ENCODE measurements at regions of chr17 and their contacts with region 1.

Region 1: GRCh38 chr17:8248751-8249607 is at the start of gene PFAS:
- H3K4me3 Mint-ChIP-seq: peak within 1 kb of the TSS; percentile 90
- H3K27ac Mint-ChIP-seq: peak within 1 kb of the TSS; percentile 99
- H3K4me1 Mint-ChIP-seq: peaks cover 33% of the 10 kb centered on the region
- H3K27me3 Mint-ChIP-seq: no peaks in the 10 kb centered on the region

Region 2: DNA sequence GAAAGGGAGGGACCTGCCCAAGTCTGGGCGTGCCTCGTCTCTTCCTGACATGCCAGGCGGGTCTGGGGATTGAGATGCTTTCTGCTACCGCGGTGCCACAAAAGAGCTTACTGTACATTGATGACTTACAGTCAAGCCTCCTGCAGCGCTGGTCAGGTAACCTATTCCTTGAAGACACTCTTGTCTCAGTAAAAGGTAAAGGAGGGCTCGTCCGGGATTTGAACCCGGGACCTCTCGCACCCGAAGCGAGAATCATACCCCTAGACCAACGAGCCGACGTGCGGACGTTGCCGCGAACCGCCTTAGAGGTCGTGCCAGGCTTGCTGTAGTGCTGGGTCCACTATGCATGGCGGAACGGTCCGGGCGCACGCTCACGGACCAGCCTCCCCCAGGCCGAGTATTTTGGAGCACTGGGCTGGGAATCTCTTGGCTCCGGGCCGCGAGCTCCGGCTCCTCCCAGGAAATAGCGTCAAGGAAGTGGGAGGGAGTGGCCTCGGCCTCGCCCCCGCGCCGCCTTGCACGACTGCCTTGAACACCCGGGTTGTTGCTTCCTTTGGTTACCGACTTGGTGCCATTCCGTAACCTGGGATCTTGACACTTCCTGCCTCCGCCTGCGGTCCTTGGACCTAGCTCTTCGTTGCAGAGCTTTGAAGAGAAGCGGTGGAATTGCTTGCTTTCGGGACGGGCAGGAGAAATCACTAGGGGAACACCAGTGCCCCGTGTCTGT is 26.2 kb before region 1 on chr17:
- intact Hi-C with region 1: loop called (anchors 1 kb)
- H3K4me3 Mint-ChIP-seq: peak overlapping the region; percentile 89
- H3K27ac Mint-ChIP-seq: peak overlapping the region; percentile 99
- H3K4me1 Mint-ChIP-seq: peaks cover 63% of the 10 kb centered on the region
- H3K27me3 Mint-ChIP-seq: no peaks in the 10 kb centered on the region

Region 3: GRCh38 chr17:8288336-8289102 is 39.5 kb after region 1 on chr17 and contains the start of gene RANGRF:
- intact Hi-C with region 1: loop called (anchors 2 kb)
- H3K4me3 Mint-ChIP-seq: peak within 1 kb of the TSS; percentile 92
- H3K27ac Mint-ChIP-seq: peak within 1 kb of the TSS; percentile 95
- H3K4me1 Mint-ChIP-seq: peaks cover 70% of the 10 kb centered on the region
- H3K27me3 Mint-ChIP-seq: no peaks in the 10 kb centered on the region

Region 4: DNA sequence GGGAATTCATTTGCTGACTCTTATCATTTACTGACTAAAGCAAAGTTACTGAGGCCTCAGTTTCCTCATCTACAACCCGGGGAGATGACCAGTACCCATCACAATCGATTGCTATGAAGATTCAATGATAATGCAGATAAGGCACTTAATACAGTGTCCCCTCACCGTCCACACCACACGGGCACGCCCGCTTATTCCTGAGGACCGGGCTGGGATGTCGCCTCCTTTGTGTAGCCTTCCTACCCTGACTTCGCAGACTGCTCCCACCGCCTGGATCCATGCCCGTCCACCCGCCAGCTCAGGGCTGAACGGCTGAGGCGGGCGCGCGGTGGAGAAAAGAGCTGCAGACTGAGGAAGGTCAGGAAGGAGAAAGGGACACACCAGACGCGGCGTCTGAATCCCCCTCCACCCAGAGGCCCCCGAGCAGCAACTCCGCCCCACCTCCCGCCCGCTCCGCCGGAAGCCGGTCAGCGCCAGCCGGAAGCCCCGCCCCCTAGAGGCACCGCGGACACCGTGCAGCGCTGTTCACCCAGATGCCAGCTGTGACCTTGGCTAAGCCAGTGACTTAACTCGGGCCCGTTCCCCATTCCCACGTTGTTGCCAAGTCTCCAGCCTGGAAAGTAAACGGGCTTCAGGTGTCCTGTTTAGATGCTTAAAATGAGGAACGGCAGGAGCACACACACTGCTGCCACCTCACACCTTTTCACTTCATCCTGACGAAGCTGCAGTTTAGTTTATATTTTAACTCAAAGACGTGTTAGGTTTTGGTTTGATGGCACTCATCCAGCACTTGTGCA is 127.5 kb after region 1 on chr17 and contains the start of gene KRABD2:
- intact Hi-C with region 1: loop called (anchors 5 kb)
- H3K4me3 Mint-ChIP-seq: peak within 1 kb of the TSS; percentile 87
- H3K27ac Mint-ChIP-seq: peak within 1 kb of the TSS; percentile 86
- H3K4me1 Mint-ChIP-seq: peaks cover 32% of the 10 kb centered on the region
- H3K27me3 Mint-ChIP-seq: no peaks in the 10 kb centered on the region

Measured in dendritic cell treated with granulocyte-macrophage colony-stimulating factor and Interleukin-4, amounts not matched to agents 40 ng/mL and 50 ng/mL, for 4 days (primary cell).